Heart left ventricle (tissue), 16 donors: ENCODE measurements at regions of chr5 and their contacts with region 1.

Region 1: DNA sequence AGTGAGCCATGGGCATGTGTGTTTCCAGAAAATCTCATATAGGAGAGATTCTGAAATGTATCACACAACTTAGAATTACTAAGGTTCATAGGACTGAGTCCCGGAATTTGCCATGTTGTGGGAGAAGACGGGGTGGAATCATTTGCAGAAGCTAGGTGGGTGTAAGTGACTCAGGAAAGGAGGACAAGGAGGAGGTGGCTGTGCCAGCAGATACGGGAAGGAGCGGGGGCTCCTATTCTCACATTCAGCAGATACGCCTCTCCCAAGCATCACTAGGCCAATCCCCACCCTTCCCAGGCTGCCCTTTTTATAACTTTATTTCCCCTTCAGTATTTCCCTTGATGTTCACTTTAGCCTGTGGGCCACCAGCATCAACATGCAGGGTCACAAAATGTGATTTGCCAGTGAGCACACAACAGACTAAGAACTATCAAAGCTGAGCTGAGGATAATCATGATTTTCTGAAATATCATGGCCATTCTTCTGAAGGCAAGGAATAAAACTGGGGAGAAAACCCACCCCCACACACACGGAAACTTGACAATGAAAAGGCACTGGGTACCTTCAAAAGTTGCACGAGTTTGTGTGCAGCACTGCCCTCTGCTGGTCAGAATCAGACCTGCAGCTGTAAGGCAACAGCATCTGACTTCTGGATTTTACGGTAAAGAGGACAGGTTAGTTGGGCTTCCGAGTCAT is 133.2 kb downstream of the MTX3 start:
- DNase-seq: peak; percentile 60 to 83 (median 73)
- ATAC-seq: peak; percentile 38 to 69 (median 58)
- H3K4me3 ChIP-seq: no peak overlapping the region
- H3K27ac ChIP-seq: no peak overlapping the region
- H3K4me1 ChIP-seq: peaks cover 0 to 23% (median 3%) of the 10 kb centered on the region in 12 donors
- H3K27me3 ChIP-seq: no peaks in the 10 kb centered on the region
- CTCF ChIP-seq: peak; percentile 87 to 97 (median 96)
- POLR2A ChIP-seq: no peak

Region 2: GRCh38 chr5:79552984-79553383 is 304.9 kb before region 1 on chr5:
- intact Hi-C with region 1: loop called in 2 of 10 experiments (anchors 2 kb)
- DNase-seq: no peak
- ATAC-seq: peak in 1 of 4 donors; percentile 32
- H3K4me3 ChIP-seq: no peak overlapping the region
- H3K27ac ChIP-seq: no peak overlapping the region
- H3K4me1 ChIP-seq: peaks cover 0 to 9% (median 0%) of the 10 kb centered on the region in 12 donors
- H3K27me3 ChIP-seq: no peaks in the 10 kb centered on the region
- CTCF ChIP-seq: no peak
- POLR2A ChIP-seq: no peak

Region 3: GRCh38 chr5:79666758-79667157 is 191.1 kb before region 1 on chr5:
- intact Hi-C with region 1: loop called in 1 of 10 experiments (anchors 10 kb)
- DNase-seq: no peak
- ATAC-seq: no peak
- H3K4me3 ChIP-seq: no peak overlapping the region
- H3K27ac ChIP-seq: no peak overlapping the region
- H3K4me1 ChIP-seq: no peaks in the 10 kb centered on the region
- H3K27me3 ChIP-seq: no peaks in the 10 kb centered on the region
- CTCF ChIP-seq: no peak
- POLR2A ChIP-seq: no peak

Region 4: DNA sequence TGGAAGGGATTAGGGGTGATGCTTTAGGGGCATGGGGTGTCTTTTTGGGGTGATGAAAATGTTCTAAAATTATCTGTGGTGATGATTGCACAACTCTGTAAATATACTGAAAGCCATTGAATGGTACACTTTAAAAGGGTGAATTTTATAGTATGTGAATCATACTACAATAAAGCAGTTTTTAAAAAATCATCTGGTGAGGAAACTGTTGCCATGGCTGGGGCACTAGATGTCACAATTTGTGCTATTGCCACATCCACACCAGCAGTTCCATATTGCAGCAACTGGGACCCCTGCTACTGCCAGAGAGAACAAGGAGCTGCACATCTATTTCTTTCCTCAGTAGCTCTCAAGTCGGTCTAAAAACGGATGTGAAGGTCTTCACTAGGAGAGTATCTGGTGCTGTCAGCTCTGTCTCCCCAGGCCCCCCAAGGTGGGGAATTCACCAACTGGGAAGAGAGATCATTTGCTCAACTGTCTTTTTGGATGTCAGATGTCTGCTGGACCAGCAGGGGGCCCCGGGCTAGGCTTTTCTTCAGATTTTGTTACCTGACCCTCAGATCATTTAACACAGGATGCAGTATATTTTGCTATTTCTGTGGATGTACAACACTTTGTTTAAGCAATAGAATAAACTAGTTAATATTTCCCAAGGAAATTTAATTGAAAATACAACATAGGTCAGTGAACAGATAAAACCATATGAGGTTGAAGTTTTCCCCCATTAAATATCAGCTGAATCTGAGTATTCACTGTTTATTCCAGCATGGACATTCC is 155.1 kb before region 1 on chr5:
- intact Hi-C with region 1: loop called in 8 of 10 experiments (anchors 5 to 10 kb)
- DNase-seq: peak in 1 of 5 donors; percentile 29
- ATAC-seq: peak in 2 of 4 donors; percentile 7 to 13
- H3K4me3 ChIP-seq: no peak overlapping the region
- H3K27ac ChIP-seq: peak overlapping the region; percentile 23 to 99 (median 54)
- H3K4me1 ChIP-seq: peaks cover 0 to 60% (median 19%) of the 10 kb centered on the region in 12 donors
- H3K27me3 ChIP-seq: no peaks in the 10 kb centered on the region
- CTCF ChIP-seq: peak; percentile 2 to 65 (median 47)
- POLR2A ChIP-seq: no peak